IMR-90 (cell line): ENCODE measurements at regions of chr15 and their contacts with region 1.

Region 1: DNA sequence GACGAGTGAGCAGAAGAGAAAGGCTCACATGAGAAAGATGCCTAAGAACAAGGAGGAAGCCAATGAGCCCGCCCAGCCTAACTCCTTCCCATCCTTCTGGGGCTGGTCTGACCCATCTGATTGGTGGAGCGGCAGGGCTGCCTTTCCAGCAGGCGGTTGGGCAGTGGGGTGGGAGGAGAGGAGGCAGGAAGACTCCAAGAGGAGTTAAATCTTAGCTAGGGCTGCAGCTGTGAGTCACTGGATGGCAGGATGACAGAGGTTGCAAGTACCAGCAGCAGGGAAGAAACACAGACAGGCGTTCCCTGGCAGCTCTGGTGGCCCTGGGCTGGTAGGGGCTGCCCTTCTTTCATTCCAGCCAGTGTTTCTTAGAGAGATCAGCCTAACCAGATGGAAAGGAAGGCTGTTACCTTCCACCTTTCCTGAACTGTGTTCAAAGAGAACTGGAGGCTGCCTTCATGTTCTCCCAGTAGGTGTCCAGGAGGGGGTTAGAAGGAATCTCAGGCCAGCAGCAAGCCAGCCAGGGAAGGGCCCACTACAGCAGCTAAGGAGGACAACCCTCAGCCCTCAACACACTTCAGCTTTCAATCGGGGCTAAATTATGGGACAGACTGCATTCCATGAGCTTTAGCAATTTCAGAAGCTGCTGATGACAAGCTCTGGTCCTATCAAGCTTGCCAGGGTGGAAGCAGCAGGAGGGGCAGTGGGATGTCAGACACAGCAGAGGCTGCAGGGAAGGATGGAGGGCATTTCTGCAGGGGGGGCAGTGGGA is 50.3 kb downstream of the CHSY1 start:
- DNase-seq: peak; percentile 99
- ATAC-seq: peak; percentile 93
- H3K4me3 ChIP-seq: no peak overlapping the region
- H3K27ac ChIP-seq: peak overlapping the region; percentile 83
- H3K4me1 ChIP-seq: peaks cover 36% of the 10 kb centered on the region
- H3K27me3 ChIP-seq: no peaks in the 10 kb centered on the region
- CTCF ChIP-seq: no peak
- POLR2A ChIP-seq: peak; percentile 61; the same call in 1 of the 2 replicates
- RAD21 ChIP-seq: no peak

Region 2: GRCh38 chr15:101121511-101122090 is 80.0 kb before region 1 on chr15:
- CTCF ChIA-PET with region 1: interaction called, 3 read pairs
- POLR2A ChIA-PET with region 1: no interaction called
- dilution Hi-C with region 1: no loop called
- in situ Hi-C with region 1: no loop called
- intact Hi-C with region 1: loop called (anchors 2 kb)
- DNase-seq: peak; percentile 74
- ATAC-seq: peak; percentile 84
- H3K4me3 ChIP-seq: peak overlapping the region; percentile 5; the same call in 1 of the 2 replicates
- H3K27ac ChIP-seq: peak overlapping the region; percentile 76
- H3K4me1 ChIP-seq: peaks cover 20% of the 10 kb centered on the region
- H3K27me3 ChIP-seq: no peaks in the 10 kb centered on the region
- CTCF ChIP-seq: peak; percentile 56
- POLR2A ChIP-seq: no peak; the same call in 1 of the 2 replicates
- RAD21 ChIP-seq: peak; percentile 64

Region 3: DNA sequence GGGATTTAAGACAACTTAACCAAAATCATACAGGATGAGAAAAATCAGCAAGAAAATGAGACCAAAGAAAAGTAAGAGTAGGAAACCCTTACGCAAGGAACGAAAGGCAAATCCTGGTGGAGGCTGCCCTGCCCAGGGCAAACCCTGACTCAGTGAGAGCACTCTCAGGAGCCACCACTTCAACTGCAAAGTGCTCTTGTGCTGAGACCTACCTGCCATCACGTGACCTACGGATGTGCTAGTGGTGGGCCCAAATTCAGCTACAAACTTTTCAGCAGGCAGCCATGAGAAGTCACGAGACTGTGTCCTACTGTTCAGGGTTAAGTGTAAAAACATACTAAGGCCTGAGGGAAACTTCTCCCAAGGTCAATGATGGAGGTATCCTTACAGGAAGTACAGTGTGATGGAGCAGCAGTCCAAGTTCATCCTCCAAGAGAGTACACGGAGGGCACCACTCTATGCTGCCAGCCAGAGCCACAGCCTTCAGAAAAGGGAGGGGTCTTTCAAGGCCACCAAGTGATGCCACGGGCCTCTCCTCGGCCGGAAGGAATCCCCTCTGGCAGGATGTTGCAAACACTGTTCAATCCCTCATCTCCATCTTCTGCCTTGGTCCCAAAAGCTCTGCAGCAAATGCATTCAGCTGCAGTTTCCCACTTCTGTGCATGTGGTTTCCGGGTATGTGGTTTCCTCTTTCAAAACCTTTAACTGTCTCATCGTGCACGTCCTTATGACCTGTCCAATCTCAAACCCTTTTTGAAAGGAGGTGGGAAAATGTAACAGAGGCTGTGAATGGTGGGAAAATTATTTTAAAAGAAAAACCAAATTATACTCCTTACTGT is 40.8 kb after region 1 on chr15:
- CTCF ChIA-PET with region 1: no interaction called
- POLR2A ChIA-PET with region 1: no interaction called
- dilution Hi-C with region 1: no loop called
- in situ Hi-C with region 1: loop called (anchors 5 kb)
- intact Hi-C with region 1: loop called (anchors 5 kb)
- DNase-seq: peak; percentile 59
- ATAC-seq: 0 out of 2 replicates have a peak, but pooled peaks have one; percentile 7
- H3K4me3 ChIP-seq: no peak overlapping the region
- H3K27ac ChIP-seq: peak overlapping the region; percentile 27; the same call in 1 of the 2 replicates
- H3K4me1 ChIP-seq: peaks cover 34% of the 10 kb centered on the region
- H3K27me3 ChIP-seq: no peaks in the 10 kb centered on the region
- CTCF ChIP-seq: no peak
- POLR2A ChIP-seq: no peak
- RAD21 ChIP-seq: no peak